SK-N-SH (cell line): ENCODE measurements at regions of chr1 and their contacts with region 1.

Region 1: GRCh38 chr1:3796215-3797061 is at the start of gene LRRC47:
- DNase-seq: peak; percentile 98
- H3K4me3 ChIP-seq: peak within 1 kb of the TSS; percentile 74 to 79
- H3K27ac ChIP-seq: peak within 1 kb of the TSS in 1 of 2 experiments; percentile 70; a peak in 3 of 4 replicates
- H3K4me1 ChIP-seq: peaks cover 0 to 20% of the 10 kb centered on the region in 2 experiments; a peak in 2 of 4 replicates
- H3K27me3 ChIP-seq: no peaks in the 10 kb centered on the region
- CTCF ChIP-seq: no peak
- EP300 ChIP-seq: no peak
- RAD21 ChIP-seq: no peak
- polyA plus RNA-seq, gene LRRC47: 26.9 and 34.6 TPM in 2 replicates

Region 2: DNA sequence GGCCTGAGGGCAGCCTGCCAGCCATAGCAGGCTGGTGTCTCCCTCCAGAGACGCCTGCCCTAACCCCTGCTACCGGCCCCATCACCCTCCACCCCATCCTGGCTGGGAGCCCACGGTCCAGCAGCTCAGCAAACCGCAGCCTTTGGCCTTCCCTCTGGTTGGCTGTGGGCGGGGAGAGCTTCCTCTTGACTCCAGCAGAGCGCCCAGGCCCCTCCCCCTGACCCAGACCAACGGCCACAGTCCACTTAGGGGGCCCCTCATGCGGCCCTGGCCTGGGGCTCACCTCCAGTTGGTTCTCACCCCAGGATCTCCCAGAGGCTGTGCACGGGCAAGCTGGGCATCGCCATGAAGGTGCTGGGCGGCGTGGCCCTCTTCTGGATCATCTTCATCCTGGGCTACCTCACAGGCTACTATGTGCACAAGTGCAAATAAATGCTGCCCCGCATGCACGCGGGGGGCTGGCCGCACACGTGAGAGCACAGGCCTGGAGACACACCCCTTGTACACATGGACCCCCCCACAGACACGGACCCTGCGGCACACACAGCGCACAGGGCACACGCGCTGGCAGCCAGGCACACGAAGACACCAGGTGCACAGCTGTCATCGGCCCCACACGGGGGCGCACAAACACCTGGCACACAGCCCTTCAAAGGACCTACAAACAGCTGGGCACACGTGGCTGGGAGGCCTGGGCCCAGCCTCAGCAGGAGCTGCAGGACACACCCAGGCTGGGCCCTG is 20.8 kb before region 1 on chr1:
- CTCF ChIA-PET with region 1: interaction called, 10 read pairs
- POLR2A ChIA-PET with region 1: interaction called, 14 read pairs
- DNase-seq: peak; percentile 87
- H3K4me3 ChIP-seq: no peak overlapping the region
- H3K27ac ChIP-seq: peak overlapping the region in 1 of 2 experiments; percentile 92; a peak in 2 of 4 replicates
- H3K4me1 ChIP-seq: peaks cover 0 to 67% of the 10 kb centered on the region in 2 experiments; a peak in 1 of 4 replicates
- H3K27me3 ChIP-seq: no peaks in the 10 kb centered on the region
- CTCF ChIP-seq: peak; percentile 24; the same call in 1 of the 2 replicates
- EP300 ChIP-seq: no peak
- RAD21 ChIP-seq: peak; percentile 47

Region 3: DNA sequence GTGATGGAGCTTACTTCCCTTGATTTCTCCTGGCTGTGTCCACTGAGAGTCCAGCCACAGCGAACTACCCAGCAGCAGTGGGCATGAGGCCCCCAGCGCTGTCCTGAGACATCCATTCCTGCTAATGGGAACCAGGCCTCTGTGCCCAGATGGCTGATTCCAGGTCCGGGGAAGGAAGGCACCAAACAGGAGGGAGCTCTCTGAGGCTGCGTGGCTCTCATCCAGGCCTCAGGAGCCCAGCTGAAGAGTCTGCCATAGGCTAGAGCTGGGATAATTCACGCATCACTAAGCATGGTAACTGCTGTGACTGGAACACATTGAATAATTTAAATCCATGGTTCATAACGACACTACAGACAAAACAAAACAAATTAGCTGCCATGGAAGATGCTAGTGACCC is 24.6 kb after region 1 on chr1:
- CTCF ChIA-PET with region 1: interaction called, 10 read pairs
- POLR2A ChIA-PET with region 1: no interaction called
- DNase-seq: peak; percentile 95
- H3K4me3 ChIP-seq: no peak overlapping the region
- H3K27ac ChIP-seq: peak overlapping the region in 1 of 2 experiments; percentile 99; a peak in 2 of 4 replicates
- H3K4me1 ChIP-seq: peaks cover 0 to 43% of the 10 kb centered on the region in 2 experiments; a peak in 2 of 4 replicates
- H3K27me3 ChIP-seq: no peaks in the 10 kb centered on the region
- CTCF ChIP-seq: no peak
- EP300 ChIP-seq: no peak; a peak in 1 of 4 replicates
- RAD21 ChIP-seq: no peak